Common myeloid progenitor, CD34-positive (primary cell): ENCODE measurements at regions of chr6 and their contacts with region 1.

Region 1: GRCh38 chr6:125888989-125889656 is 67.4 kb upstream of the HINT3 start:
- DNase-seq: peak; percentile 51 to 73 (median 70)
- H3K4me3 ChIP-seq: no peak overlapping the region
- H3K27ac ChIP-seq: no peak overlapping the region
- H3K4me1 ChIP-seq: peaks cover 0 to 20% (median 1%) of the 10 kb centered on the region in 4 experiments
- H3K27me3 ChIP-seq: no peaks in the 10 kb centered on the region

Region 2: GRCh38 chr6:125872259-125872921 is 16.7 kb before region 1 on chr6:
- CTCF ChIA-PET with region 1: interaction called, 14 read pairs
- POLR2A ChIA-PET with region 1: no interaction called
- DNase-seq: peak in 2 of 3 donors; percentile 53 to 72
- H3K4me3 ChIP-seq: no peak overlapping the region
- H3K27ac ChIP-seq: no peak overlapping the region
- H3K4me1 ChIP-seq: peaks cover 0 to 6% (median 2%) of the 10 kb centered on the region in 4 experiments
- H3K27me3 ChIP-seq: no peaks in the 10 kb centered on the region

Region 3: GRCh38 chr6:125906158-125906998 is 17.3 kb after region 1 on chr6:
- CTCF ChIA-PET with region 1: interaction called, 14 read pairs
- POLR2A ChIA-PET with region 1: no interaction called
- DNase-seq: peak; percentile 53 to 66 (median 55)
- H3K4me3 ChIP-seq: no peak overlapping the region
- H3K27ac ChIP-seq: no peak overlapping the region
- H3K4me1 ChIP-seq: peaks cover 0 to 10% (median 7%) of the 10 kb centered on the region in 4 experiments
- H3K27me3 ChIP-seq: no peaks in the 10 kb centered on the region